Aorta (tissue), 5 donors: ENCODE measurements at regions of chr5 and their contacts with region 1.

Region 1: DNA sequence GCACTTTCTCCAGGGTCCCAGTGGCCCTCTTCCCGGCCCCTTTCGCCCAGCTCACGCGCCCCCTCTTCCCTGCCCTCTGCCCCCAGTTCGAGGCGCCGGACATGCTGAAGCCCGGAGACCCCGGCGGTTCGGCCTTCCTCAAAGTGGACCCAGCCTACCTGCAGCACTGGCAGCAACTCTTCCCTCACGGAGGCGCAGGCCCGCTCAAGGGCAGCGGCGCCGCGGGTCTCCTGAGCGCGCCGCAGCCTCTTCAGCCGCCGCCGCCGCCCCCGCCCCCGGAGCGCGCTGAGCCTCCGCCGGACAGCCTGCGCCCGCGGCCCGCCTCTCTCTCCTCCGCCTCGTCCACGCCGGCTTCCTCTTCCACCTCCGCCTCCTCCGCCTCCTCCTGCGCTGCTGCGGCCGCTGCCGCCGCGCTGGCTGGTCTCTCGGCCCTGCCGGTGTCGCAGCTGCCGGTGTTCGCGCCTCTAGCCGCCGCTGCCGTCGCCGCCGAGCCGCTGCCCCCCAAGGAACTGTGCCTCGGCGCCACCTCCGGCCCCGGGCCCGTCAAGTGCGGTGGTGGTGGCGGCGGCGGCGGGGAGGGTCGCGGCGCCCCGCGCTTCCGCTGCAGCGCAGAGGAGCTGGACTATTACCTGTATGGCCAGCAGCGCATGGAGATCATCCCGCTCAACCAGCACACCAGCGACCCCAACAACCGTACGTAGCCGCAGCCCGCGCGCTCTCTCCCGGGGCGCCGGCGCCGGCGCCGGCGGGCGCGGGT is 1.1 kb downstream of the PRDM6 start:
- DNase-seq: peak; percentile 54 to 79
- ATAC-seq: no peak
- H3K4me3 ChIP-seq: peak overlapping the region; percentile 79 to 98
- H3K27ac ChIP-seq: peak overlapping the region; percentile 73 to 89
- H3K4me1 ChIP-seq: no peaks in the 10 kb centered on the region
- H3K27me3 ChIP-seq: no peaks in the 10 kb centered on the region

Region 2: GRCh38 chr5:122500245-122501075 is 589.6 kb before region 1 on chr5:
- intact Hi-C with region 1: loop called in 1 of 2 experiments (anchors 10 kb)
- DNase-seq: no peak
- ATAC-seq: peak; percentile 87
- H3K4me3 ChIP-seq: peak overlapping the region; percentile 13 to 36
- H3K27ac ChIP-seq: peak overlapping the region; percentile 53 to 72
- H3K4me1 ChIP-seq: peaks cover 0 to 4% of the 10 kb centered on the region in 2 donors
- H3K27me3 ChIP-seq: no peaks in the 10 kb centered on the region

Region 3: DNA sequence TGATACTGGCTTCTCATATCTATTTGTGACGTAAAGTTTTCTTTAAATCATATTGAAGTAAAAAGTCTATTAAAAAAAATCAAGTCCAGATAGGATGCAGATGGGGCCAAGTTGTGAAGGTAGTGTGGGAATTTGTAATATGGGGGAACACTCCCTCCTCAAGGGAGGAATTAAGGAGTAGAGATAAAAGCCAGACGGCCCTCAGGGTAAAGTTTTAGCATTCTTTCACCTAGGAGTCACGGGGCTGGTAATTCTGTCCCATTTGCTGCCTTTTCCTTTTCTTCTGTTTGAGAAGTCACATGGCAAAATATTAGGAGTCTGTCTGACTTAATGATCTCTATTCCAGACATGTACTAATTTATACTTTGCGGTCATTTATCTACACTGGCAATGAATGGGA is 182.9 kb before region 1 on chr5:
- intact Hi-C with region 1: loop called (anchors 5 kb)
- DNase-seq: no peak
- ATAC-seq: no peak
- H3K4me3 ChIP-seq: no peak overlapping the region
- H3K27ac ChIP-seq: no peak overlapping the region
- H3K4me1 ChIP-seq: peaks cover 2 to 4% of the 10 kb centered on the region in 2 donors
- H3K27me3 ChIP-seq: no peaks in the 10 kb centered on the region

Region 4: DNA sequence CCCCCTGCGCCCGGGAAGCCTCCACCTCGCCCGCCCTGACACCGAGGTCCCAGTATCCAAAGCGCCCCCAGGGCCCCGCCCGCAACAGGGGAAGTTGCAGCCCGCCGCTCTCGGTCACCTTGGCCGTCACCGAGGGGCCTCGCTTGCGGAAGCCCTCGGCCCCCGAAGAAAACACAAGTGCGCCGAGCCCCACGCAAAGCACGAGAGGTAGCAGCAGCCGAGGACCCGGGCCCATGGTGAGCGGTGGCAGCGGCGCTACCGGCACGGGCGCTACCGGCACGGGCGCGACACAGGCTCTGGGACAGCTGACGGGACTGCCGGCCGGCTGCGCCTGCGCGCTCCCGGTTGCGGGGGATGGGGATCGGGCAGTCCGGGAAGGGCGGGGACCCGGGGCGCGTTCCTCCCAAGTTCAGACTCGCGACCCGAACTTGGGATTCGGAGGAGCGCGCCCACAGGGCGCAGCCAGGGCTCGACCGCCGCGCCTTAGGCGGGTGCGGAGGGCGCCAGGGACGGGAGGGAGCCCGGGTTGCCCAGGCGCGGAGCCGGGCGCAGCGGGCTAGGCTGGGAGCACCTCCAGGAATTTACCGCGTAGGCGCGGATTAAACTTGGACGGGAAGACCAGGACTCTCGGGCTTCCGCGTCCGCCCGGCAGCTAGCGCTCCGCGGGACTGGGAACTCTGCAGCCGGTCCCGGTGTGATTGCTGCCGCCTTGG is 53.5 kb before region 1 on chr5 and contains the start of gene PPIC:
- intact Hi-C with region 1: loop called (anchors 2 to 5 kb)
- DNase-seq: peak; percentile 92 to 97
- ATAC-seq: peak; percentile 96
- H3K4me3 ChIP-seq: peak within 1 kb of the TSS; percentile 70 to 92
- H3K27ac ChIP-seq: peak within 1 kb of the TSS; percentile 82 to 88
- H3K4me1 ChIP-seq: no peaks in the 10 kb centered on the region
- H3K27me3 ChIP-seq: no peaks in the 10 kb centered on the region
- total RNA-seq, gene PPIC: 52.5 to 71.1 TPM

Region 5: DNA sequence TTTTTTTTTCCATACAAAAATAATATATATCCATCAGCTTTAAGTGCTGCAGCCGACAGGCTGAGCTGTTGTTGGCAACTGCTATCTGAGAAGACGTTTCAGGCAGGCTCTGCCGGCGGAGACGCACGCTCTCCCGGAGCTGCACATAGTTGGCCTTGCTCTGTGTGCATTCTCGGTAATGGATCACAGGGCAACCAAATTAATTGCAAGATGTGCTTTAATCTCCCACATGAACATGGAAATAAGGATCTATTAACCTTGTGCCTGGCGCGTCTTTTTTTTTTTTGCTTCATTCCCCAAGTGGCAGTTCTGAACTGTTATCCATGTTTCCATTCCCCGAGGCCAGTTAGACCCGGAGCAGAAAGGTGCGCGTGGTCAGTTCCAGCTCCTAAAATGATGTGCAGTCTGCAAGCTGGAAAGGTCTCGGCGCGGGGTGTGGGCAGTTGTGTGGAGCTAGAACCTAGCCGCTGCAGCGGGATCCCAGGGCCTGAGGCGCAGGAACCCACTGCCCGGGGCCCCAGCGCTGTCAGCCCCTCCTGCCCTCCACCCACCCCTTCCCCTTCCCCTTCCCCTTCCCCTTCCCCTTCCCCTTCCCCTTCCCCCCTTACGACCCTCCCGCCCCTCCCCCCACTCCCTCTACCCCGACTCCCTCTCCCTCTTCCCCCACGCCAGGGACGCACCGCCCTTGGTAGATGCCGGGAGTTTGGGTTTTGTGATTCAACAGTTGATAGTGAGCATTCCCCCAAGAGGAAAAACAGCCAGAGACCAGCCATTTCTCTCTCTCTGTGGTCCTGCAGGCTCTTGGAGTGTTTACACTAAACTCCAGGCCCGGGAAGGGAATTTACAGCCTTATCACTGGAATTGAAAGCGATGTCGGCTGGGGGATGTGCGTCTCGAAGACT is 195.3 kb after region 1 on chr5:
- intact Hi-C with region 1: loop called (anchors 2 to 5 kb)
- DNase-seq: peak; percentile 66 to 80
- ATAC-seq: peak; percentile 75
- H3K4me3 ChIP-seq: peak overlapping the region; percentile 42 to 62
- H3K27ac ChIP-seq: peak overlapping the region; percentile 55 to 93
- H3K4me1 ChIP-seq: peaks cover 0 to 2% of the 10 kb centered on the region in 2 donors
- H3K27me3 ChIP-seq: no peaks in the 10 kb centered on the region

Region 6: GRCh38 chr5:123359454-123360200 is 269.5 kb after region 1 on chr5:
- intact Hi-C with region 1: loop called (anchors 5 kb)
- DNase-seq: no peak
- ATAC-seq: peak; percentile 88
- H3K4me3 ChIP-seq: no peak overlapping the region
- H3K27ac ChIP-seq: no peak overlapping the region
- H3K4me1 ChIP-seq: peaks cover 0 to 7% of the 10 kb centered on the region in 2 donors
- H3K27me3 ChIP-seq: no peaks in the 10 kb centered on the region